Sciatic nerve (tissue), 2 donors: ENCODE measurements at regions of chr19 and their contacts with region 1.

Region 1: GRCh38 chr19:17703824-17704463 is 15.3 kb upstream of the MAP1S start:
- DNase-seq: peak; percentile 78
- ATAC-seq: peak; percentile 66

Region 2: DNA sequence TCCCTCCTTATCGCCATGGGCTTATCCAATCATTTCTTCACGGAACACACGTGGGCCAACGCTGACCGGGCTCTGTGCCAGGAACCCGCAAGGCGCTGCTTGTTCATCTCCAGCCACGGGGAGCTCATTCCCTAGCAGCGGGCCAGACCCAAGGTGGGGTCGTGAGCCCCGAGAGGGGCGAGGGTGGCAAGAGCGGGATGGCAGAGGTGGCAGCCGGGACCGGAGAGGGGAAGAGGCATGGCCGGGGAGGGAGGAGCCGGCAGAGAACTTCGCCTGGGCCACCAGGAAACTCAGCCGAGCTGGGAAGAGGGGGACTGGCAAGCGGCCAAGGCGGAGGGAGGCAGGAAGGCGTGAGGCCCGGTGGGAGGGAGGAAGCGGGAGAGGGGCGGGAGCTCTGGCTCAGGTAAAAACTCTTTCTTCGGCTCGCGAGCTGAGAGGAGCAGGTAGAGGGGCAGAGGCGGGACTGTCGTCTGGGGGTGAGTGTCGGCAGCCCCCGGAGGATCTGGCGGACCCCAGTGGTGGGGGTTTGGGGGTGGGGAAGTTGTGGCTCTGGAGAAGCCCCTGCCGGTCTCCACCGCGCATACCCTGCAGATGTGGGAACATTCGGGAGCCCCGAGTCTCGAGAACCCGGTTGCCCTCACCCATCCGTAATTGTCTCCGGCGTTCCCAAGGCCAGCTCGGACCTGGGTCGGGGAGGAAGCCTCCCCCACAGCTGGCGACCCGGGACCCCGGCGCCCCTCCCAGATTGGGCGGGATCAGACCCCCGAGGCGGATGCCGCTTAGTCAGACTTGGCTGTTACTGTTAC is 91.0 kb after region 1 on chr19 and contains the start of gene B3GNT3:
- intact Hi-C with region 1: loop called (anchors 10 kb)
- DNase-seq: no peak
- ATAC-seq: no peak
- total RNA-seq, gene B3GNT3: 0.58 TPM